Right cardiac atrium (tissue), 5 donors: ENCODE measurements at regions of chr4 and their contacts with region 1.

Region 1: GRCh38 chr4:108570993-108571569 is 49.3 kb upstream of the RPL34 start:
- DNase-seq: no peak
- ATAC-seq: no peak
- H3K4me3 ChIP-seq: no peak overlapping the region
- H3K27ac ChIP-seq: no peak overlapping the region
- H3K4me1 ChIP-seq: no peaks in the 10 kb centered on the region
- H3K27me3 ChIP-seq: no peaks in the 10 kb centered on the region

Region 2: DNA sequence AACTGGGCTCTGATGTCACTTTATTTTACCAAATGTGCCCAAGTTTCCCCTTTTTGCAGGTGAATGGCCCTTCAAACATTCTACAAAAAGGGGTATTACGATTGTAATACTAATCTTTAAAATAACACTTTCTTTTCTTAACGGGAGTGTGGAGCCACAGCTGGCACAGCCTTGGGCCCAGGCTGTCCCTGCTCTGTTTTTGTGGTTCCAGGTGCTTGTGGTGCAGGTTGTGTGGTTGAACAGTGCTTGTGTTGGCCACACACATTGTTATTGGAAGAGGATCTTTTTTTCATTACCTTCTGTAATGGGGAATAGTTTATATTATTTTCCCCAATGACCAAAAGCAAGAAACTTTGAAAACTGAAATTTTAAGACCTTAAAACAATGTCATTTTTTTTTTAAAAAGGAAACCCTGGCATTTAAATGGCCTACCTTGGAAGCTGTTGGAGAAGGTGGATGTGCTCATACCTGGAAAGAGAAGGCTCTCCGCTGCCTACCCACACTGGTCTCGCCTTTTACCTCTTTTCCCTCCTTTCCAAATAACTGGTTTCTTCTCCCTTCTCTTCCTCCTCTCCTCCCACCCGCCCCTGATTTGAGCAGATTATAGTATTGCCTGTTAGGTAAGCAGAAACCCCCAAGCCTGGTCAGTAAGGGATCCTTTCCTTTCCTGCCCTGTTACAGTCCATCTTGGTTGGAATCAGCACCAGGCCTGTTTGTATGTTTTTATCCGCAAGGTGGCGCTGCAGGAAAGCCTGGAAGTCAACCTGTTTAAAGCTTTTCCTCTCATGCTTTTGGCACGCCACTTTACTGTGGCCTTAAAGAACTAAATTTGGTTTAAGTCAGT is 552.8 kb before region 1 on chr4:
- intact Hi-C with region 1: loop called in 3 of 4 experiments (anchors 5 to 10 kb)
- DNase-seq: peak; percentile 74 to 90 (median 84)
- ATAC-seq: peak; percentile 71 to 73
- H3K4me3 ChIP-seq: no peak overlapping the region
- H3K27ac ChIP-seq: no peak overlapping the region
- H3K4me1 ChIP-seq: no peaks in the 10 kb centered on the region
- H3K27me3 ChIP-seq: no peaks in the 10 kb centered on the region

Region 3: GRCh38 chr4:108029731-108030130 is 541.4 kb before region 1 on chr4:
- intact Hi-C with region 1: loop called in 1 of 4 experiments (anchors 10 kb)
- DNase-seq: no peak
- ATAC-seq: peak in 1 of 2 donors; percentile 22
- H3K4me3 ChIP-seq: no peak overlapping the region
- H3K27ac ChIP-seq: no peak overlapping the region
- H3K4me1 ChIP-seq: no peaks in the 10 kb centered on the region
- H3K27me3 ChIP-seq: no peaks in the 10 kb centered on the region

Region 4: GRCh38 chr4:108053251-108053711 is 517.8 kb before region 1 on chr4:
- intact Hi-C with region 1: loop called in 1 of 4 experiments (anchors 10 kb)
- DNase-seq: no peak
- ATAC-seq: no peak
- H3K4me3 ChIP-seq: no peak overlapping the region
- H3K27ac ChIP-seq: no peak overlapping the region
- H3K4me1 ChIP-seq: no peaks in the 10 kb centered on the region
- H3K27me3 ChIP-seq: no peaks in the 10 kb centered on the region

Region 5: DNA sequence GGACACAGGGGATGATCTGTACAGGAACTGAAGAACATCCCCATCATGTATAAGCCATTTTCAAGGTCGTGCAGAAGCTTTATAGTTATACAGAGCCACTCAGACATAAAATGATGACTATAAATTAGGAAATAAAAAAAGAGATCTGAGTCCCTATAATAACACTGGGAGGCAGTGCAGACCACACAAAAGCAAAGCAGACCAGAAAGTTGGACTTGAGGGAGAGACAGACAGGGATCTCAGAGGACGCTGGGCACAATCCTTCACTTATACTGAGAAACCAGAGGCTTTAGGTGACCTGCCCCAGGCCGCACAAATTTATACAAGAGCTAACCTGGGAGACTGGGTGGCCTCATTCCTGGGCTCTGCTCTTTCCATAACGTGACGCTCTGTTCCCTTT is 510.9 kb before region 1 on chr4:
- intact Hi-C with region 1: loop called in 3 of 4 experiments (anchors 5 to 10 kb)
- DNase-seq: no peak
- ATAC-seq: peak; percentile 50 to 64
- H3K4me3 ChIP-seq: no peak overlapping the region
- H3K27ac ChIP-seq: no peak overlapping the region
- H3K4me1 ChIP-seq: no peaks in the 10 kb centered on the region
- H3K27me3 ChIP-seq: no peaks in the 10 kb centered on the region

Region 6: GRCh38 chr4:108272566-108272965 is 298.5 kb before region 1 on chr4:
- intact Hi-C with region 1: no loop called
- DNase-seq: no peak
- ATAC-seq: no peak
- H3K4me3 ChIP-seq: no peak overlapping the region
- H3K27ac ChIP-seq: no peak overlapping the region
- H3K4me1 ChIP-seq: no peaks in the 10 kb centered on the region
- H3K27me3 ChIP-seq: no peaks in the 10 kb centered on the region

Region 7: DNA sequence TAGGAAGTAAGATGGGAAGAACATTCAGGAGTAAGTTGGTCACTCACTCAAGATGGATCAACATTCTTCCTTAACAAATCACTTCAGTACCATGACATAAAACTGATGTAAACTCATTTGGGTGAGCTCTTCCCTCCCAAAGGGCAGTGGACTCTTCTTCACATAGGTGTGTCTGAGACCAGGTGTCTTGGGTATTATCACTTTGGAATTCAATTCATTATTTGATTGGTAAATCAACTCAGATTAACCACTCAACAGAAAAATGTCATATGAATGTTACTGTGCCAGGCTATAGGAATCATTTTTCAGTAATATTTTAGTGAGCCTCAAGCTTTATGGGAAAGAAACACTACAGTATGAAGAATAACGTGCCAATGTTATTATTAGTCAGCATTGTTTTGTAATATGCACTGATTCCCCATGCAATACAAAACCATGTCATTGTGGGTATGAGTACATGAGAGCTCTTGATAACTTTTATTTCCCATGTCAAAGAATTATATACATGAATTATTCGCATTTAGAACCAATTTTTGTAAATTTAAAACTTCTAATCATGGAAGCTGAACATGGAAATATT is 250.4 kb after region 1 on chr4:
- intact Hi-C with region 1: no loop called
- DNase-seq: no peak
- ATAC-seq: no peak
- H3K4me3 ChIP-seq: no peak overlapping the region
- H3K27ac ChIP-seq: no peak overlapping the region
- H3K4me1 ChIP-seq: no peaks in the 10 kb centered on the region
- H3K27me3 ChIP-seq: no peaks in the 10 kb centered on the region